Prostate gland (tissue), 2 donors: ENCODE measurements at regions of chr22 and their contacts with region 1.

Region 1: DNA sequence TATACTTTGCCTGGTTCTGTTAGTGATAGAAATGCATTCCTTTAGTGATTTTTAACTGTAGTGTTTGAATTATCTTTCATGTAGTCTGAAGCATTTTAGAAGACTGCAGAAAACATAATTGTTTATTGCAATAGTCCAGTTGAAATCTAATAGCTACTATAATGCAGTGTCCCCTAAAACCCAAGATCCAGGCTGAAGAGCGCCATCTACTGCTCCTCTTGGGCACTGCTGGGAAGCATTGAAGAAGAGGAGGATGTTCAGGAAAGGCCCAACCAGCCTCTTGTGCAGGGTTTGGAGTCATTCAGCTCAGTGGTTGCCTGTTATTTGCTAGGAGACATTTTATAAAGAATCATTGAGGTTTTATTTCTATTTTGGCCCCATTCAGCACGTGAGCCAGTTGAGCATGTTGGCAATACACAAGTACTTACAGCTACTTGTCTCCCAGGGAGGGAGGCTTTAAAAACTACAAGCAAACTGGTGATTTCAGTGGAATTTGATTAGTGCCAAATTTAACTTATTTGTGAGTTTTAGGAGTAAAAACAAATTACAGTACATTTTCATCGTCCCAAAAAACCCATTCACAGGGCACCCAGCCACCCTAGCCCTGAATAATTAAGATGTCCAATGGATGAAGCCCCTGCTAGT is 74.9 kb upstream of the HORMAD2 start:
- DNase-seq: peak; percentile 66
- H3K4me3 ChIP-seq: no peak overlapping the region
- H3K27ac ChIP-seq: no peak overlapping the region
- H3K4me1 ChIP-seq: peaks cover 16% of the 10 kb centered on the region
- H3K27me3 ChIP-seq: no peaks in the 10 kb centered on the region
- CTCF ChIP-seq: peak; percentile 63 to 89 (median 83)
- POLR2A ChIP-seq: no peak

Region 2: DNA sequence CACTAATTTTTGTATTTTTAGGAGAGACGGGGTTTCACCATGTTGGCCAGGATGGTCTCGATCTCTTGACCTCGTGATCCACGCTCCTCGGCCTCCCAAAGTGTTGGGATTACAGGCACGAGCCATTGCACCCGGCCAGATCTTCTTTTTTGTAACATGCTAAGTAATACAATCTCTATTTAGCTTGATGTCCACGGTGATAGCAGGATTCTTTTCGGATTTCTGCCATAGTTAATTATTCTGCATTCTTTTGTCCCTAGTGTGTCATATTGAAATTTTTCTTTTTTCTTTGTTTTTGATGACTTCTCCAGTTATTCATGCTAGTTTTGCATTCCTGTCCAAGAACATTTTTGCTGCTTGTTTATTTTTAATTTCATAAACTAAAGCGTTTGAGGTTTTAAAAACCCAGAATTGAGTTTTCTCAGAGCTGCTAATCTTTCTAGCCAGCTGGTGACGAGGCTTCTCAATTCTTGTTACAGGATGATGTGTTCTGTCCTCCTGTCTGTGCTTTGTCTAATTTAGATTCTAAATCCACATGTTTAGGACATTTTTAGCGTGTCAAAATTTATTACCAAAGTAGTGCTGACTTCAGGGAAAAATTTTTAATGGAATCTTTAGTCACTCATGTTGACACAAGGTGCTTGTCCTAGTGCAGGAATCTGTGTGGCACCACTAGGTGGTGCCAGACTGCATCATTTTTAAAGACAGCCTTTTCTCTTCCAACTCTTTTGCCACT is 380.1 kb before region 1 on chr22:
- intact Hi-C with region 1: loop called (anchors 5 kb)
- DNase-seq: peak; percentile 59
- H3K4me3 ChIP-seq: no peak overlapping the region
- H3K27ac ChIP-seq: no peak overlapping the region
- H3K4me1 ChIP-seq: peaks cover 5% of the 10 kb centered on the region
- H3K27me3 ChIP-seq: no peaks in the 10 kb centered on the region
- CTCF ChIP-seq: peak; percentile 57 to 84 (median 82)
- POLR2A ChIP-seq: no peak

Region 3: GRCh38 chr22:29689880-29690213 is 315.5 kb before region 1 on chr22:
- intact Hi-C with region 1: loop called (anchors 10 kb)
- DNase-seq: peak; percentile 49
- H3K4me3 ChIP-seq: no peak overlapping the region
- H3K27ac ChIP-seq: peak overlapping the region in 1 of 2 donors; percentile 1
- H3K4me1 ChIP-seq: peaks cover 3% of the 10 kb centered on the region
- H3K27me3 ChIP-seq: no peaks in the 10 kb centered on the region
- CTCF ChIP-seq: peak in 3 of 4 experiments; percentile 44 to 73 (median 64)
- POLR2A ChIP-seq: no peak

Region 4: DNA sequence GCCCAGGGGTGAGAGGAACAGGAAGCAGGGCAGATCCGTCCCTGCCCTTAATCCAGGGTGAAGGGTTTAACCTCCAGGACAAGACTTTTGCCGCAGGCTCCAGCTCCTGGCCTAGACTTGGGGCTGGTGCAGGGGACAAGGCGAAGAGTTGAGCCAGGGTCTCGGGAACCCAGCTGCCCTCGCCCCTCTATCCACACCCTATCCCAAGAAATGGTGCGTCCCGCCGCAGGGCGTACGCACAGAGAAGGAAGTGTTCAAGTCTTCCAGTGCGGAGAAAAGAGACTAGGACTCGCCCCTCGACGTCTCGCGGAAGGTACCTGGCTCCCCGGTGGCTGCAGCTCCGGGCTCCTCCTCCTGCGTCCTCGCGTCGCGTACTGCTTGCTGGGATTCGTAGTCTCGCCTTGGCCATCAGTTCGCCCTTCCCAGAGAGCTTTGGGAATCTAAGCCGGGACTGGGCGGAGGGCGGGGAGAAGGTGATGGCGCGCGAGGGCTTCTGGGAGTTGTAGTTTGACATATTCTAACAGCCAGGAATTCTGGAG is 238.6 kb before region 1 on chr22 and contains the start of gene ZMAT5:
- intact Hi-C with region 1: no loop called
- DNase-seq: peak; percentile 97
- H3K4me3 ChIP-seq: peak within 1 kb of the TSS; percentile 54 to 78
- H3K27ac ChIP-seq: peak within 1 kb of the TSS; percentile 80 to 83
- H3K4me1 ChIP-seq: peaks cover 11% of the 10 kb centered on the region
- H3K27me3 ChIP-seq: no peaks in the 10 kb centered on the region
- CTCF ChIP-seq: peak in 1 of 4 experiments; percentile 15
- POLR2A ChIP-seq: peak; percentile 90
- total RNA-seq, gene ZMAT5: 32.9 to 33.5 TPM

Region 5: GRCh38 chr22:29837780-29838598 is 167.3 kb before region 1 on chr22 and contains the start of gene ASCC2:
- intact Hi-C with region 1: loop called (anchors 5 kb)
- DNase-seq: peak; percentile 99
- H3K4me3 ChIP-seq: peak within 1 kb of the TSS; percentile 70 to 94
- H3K27ac ChIP-seq: peak within 1 kb of the TSS; percentile 75 to 83
- H3K4me1 ChIP-seq: no peaks in the 10 kb centered on the region
- H3K27me3 ChIP-seq: no peaks in the 10 kb centered on the region
- CTCF ChIP-seq: peak in 2 of 4 experiments; percentile 27 to 42
- POLR2A ChIP-seq: peak; percentile 79
- total RNA-seq, gene ASCC2: 42.5 to 82.6 TPM

Region 6: GRCh38 chr22:29883045-29883774 is 122.1 kb before region 1 on chr22 and contains the start of gene MTMR3:
- intact Hi-C with region 1: loop called (anchors 5 kb)
- DNase-seq: peak; percentile 95
- H3K4me3 ChIP-seq: peak within 1 kb of the TSS; percentile 88 to 100
- H3K27ac ChIP-seq: peak within 1 kb of the TSS; percentile 98 to 99
- H3K4me1 ChIP-seq: no peaks in the 10 kb centered on the region
- H3K27me3 ChIP-seq: no peaks in the 10 kb centered on the region
- CTCF ChIP-seq: peak; percentile 33 to 70 (median 53)
- POLR2A ChIP-seq: peak; percentile 80
- total RNA-seq, gene MTMR3: 37.9 to 93.7 TPM